Thyroid gland (tissue), 4 donors: ENCODE measurements at regions of chr17 and their contacts with region 1.

Region 1: DNA sequence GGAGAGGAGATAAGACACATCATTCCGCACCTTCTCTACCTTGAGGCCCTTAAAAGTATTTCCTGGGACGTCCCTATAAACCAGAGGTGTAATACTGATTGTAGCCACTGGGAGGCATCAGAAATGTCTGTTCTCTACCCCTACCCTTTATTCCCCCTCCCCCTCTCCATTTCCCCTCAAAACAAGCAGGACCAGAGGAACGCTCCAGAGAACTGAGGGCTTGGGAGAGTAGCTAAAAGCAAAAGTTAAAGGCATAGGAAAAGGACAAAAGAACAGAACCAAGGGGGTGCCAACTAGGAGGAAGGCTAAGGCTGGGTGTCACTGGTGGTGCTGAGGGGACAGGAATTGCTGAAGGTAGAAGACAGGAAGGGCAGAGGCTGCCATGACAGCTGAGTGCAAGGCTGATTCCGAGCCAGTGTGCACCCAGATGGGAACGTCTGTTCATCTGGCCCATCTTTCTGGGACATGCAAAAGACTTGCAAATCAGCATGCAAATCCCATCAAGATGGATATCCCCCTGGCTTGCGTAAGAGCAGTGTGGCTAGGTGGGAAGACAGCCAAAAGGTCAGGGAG is 6.7 kb downstream of the CAMTA2 start:
- DNase-seq: peak in 1 of 2 donors; percentile 8
- H3K4me3 ChIP-seq: no peak overlapping the region
- H3K27ac ChIP-seq: no peak overlapping the region
- H3K4me1 ChIP-seq: peaks cover 0 to under 1% of the 10 kb centered on the region in 2 donors
- H3K27me3 ChIP-seq: no peaks in the 10 kb centered on the region
- CTCF ChIP-seq: peak; percentile 53 to 86 (median 72)
- POLR2A ChIP-seq: no peak

Region 2: GRCh38 chr17:4939796-4940624 is 40.7 kb before region 1 on chr17 and contains the starts of genes RNF167 and SLC25A11:
- intact Hi-C with region 1: loop called (anchors 5 kb)
- DNase-seq: peak; percentile 95 to 97
- H3K4me3 ChIP-seq: peak within 1 kb of the TSS; percentile 34 to 89 (median 69)
- H3K27ac ChIP-seq: peak within 1 kb of the TSS; percentile 91 to 97 (median 95)
- H3K4me1 ChIP-seq: peaks cover 17 to 28% of the 10 kb centered on the region in 2 donors
- H3K27me3 ChIP-seq: no peaks in the 10 kb centered on the region
- CTCF ChIP-seq: no peak
- POLR2A ChIP-seq: peak in 1 of 2 donors; percentile 79
- total RNA-seq, gene RNF167: 47.1 to 77.0 (median 67.2) TPM
- total RNA-seq, gene SLC25A11: 29.3 to 62.4 (median 48.4) TPM

Region 3: DNA sequence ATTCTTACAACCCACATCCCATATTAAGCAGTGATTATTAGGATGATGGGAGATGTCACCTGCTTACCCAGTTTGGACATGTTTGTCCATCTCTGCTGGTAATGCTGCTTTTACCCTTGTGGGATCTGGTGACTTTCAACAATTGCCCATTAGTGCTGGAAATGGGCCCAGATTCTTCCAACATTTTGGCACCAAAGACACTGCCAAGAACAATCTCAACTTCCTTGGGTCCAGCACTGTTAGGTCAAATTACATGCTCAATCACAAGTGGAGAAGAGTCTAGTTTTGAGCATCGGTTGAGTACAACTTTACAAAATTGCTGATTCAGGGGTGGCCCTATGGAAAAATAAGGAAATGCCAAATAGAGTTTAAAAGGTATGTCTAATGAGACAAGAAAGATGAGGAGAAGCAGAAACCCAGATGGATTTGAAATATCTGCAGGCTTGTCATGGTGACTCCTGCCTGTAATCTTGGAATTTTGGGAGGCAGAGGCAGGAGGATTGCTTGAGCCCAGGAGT is 84.6 kb after region 1 on chr17:
- intact Hi-C with region 1: loop called (anchors 2 kb)
- DNase-seq: peak; percentile 10 to 24
- H3K4me3 ChIP-seq: no peak overlapping the region
- H3K27ac ChIP-seq: no peak overlapping the region
- H3K4me1 ChIP-seq: no peaks in the 10 kb centered on the region
- H3K27me3 ChIP-seq: no peaks in the 10 kb centered on the region
- CTCF ChIP-seq: no peak
- POLR2A ChIP-seq: no peak